OCI-LY7 (cell line): ENCODE measurements at regions of chr6 and their contacts with region 1.

Region 1: DNA sequence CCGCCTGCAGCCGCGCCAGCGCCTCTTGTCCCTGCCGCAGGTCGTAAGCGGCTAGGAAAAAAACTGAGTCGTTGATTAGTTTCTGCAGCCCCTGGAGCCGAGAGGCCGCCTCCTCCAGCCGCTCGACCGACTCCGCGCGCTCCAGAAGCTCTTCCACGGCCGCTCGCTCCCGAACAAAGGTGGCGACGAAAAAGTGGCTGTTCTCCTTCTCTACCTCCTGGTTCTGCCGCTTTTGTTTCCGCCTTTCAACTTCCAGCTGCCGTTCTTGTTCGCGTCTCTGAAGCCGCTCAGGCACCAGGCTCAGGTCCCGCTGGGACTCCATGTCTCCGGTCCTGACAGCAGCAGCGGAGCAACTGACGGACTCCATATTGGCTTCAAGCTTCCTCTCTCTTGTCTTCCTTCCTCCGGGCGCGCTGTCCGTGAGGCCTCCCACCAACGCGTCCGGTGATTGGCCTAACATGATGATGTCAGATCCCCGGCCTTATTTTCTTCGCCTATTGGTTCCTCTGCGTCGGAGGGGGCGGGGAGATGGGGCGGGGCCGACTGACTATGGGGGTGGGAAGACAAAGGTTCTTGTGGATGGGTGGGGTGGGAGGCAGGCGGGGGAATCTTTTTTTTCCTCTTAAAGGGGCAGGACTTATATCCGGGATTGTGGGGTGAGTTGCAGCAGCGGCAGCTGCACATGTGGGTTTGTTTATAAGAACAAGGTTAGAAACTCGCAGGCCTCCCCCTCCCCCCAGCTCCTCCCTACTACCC is at the start of gene TBCC:
- DNase-seq: peak; percentile 99
- H3K4me3 ChIP-seq: peak within 1 kb of the TSS; percentile 82
- H3K27ac ChIP-seq: peak within 1 kb of the TSS; percentile 95
- H3K4me1 ChIP-seq: peaks cover 48% of the 10 kb centered on the region
- CTCF ChIP-seq: no peak
- total RNA-seq, gene TBCC: 118 and 136 TPM in 2 replicates

Region 2: DNA sequence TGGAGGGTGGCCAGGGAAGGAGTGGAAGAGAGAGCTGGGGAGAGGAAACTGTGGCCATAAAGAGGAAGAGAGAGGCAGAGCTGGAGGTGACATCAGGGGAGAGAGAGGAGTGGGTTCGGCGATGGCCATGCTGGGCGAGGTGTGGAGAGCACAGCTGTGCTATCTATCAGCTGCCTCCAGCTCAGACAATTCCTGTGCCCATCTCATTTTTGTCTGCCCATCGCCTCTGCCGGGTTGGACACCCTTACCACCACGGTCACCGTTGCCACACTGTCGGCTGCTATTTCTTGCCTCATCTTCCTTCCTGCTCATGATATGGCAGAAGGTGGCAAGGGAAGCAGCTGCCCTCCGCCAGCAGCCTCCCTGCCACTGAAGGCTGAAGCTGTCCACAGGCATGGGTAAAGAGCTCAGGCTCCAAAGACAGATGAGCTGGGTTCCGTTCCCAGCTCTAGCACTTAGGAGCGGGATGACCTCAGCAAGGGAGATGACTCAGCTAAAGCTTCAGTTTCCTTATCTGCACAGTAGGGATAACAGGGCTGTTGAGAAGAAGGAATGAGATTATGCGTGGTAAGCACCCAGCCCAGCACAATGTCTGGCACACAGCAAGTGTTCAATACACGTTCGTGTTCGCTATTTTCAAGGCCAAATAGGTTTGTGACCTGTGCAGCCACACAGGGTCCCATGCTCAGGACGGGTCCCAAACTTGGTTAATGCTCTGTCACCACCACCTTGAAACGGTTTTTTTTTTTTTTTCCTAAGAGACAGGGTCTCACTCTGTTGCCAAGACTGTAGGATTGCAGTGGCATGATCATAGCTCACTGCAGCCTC is 717.4 kb before region 1 on chr6:
- CTCF ChIA-PET with region 1: no interaction called
- POLR2A ChIA-PET with region 1: interaction called, 5 read pairs
- intact Hi-C with region 1: loop called (anchors 10 kb)
- DNase-seq: no peak
- H3K4me3 ChIP-seq: no peak overlapping the region
- H3K27ac ChIP-seq: peak overlapping the region; percentile 98
- H3K4me1 ChIP-seq: peaks cover 100% of the 10 kb centered on the region
- CTCF ChIP-seq: no peak

Region 3: DNA sequence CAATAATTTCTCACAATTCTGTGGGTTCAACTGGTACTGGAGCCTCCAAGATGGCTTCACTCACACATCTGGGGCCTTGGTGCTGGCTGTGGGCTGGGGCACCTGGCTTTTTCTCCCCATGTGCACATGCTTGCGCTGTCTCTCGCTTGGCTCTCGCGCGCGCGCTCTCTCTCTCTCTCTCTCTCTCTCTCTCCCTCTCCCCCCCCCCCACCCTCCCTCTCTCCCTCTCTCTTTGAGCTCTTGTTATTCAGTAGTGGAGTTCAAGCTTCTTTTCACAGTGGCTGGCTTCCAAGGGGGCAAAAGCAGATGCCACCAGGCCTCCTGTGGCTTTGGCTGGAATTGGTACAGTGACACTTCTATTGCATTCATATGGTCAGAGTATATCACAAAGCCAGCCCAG is 10.8 kb after region 1 on chr6:
- CTCF ChIA-PET with region 1: interaction called, 3 read pairs
- POLR2A ChIA-PET with region 1: interaction called, 26 read pairs
- intact Hi-C with region 1: no loop called
- DNase-seq: no peak
- H3K4me3 ChIP-seq: no peak overlapping the region
- H3K27ac ChIP-seq: no peak overlapping the region
- H3K4me1 ChIP-seq: peaks cover 14% of the 10 kb centered on the region
- CTCF ChIP-seq: no peak

Region 4: DNA sequence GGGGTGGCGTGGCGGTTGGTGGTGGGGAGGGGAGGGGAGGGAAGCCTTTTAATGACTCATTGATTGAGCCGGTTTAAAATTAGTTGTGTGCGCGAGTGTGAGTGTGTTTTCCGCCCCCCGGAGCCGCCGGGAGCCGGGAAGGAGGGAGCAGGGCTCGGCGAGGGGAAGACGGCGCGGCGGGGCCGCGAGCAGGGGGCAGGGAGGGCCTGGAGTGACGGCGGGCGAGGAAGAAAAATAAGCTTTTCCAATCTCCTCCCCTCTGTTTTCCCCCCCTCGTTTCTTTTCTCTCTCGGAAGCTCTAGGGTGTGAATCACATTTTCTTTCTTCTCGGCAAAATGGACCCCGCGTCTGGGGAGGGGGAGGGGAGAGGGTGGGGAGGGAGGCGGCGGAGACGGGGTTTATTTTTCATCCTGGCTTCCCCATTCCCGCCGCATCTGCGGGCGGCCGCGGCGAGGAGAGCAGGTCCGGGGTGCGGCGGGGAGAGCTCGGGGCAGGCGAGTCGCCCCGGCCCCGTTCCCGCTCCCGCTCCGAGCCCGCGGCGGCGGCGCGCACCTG is 36.8 kb after region 1 on chr6:
- CTCF ChIA-PET with region 1: no interaction called
- POLR2A ChIA-PET with region 1: interaction called, 494 read pairs
- intact Hi-C with region 1: loop called (anchors 1 kb)
- DNase-seq: peak; percentile 74
- H3K4me3 ChIP-seq: peak overlapping the region; percentile 75
- H3K27ac ChIP-seq: peak overlapping the region; percentile 92
- H3K4me1 ChIP-seq: peaks cover 69% of the 10 kb centered on the region
- CTCF ChIP-seq: no peak

Region 5: DNA sequence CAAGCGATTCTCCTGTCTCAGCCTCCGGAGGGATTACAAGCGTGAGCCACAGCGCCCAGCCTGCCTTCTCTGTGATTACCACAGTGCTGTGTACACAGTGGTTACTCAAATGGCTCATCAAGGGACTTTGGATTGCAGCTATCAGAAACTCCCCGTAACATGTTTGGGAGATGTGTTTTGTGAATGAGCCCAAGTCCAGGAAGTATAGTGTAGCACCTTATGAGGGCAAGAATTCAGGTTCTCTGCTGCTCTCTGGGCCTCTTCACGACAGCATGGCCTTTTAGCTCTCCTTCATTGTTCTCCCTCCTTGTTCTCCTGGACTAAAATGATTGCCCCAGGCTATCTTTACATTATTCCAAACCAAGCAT is 99.4 kb after region 1 on chr6:
- CTCF ChIA-PET with region 1: no interaction called
- POLR2A ChIA-PET with region 1: no interaction called
- intact Hi-C with region 1: no loop called
- DNase-seq: no peak
- H3K4me3 ChIP-seq: no peak overlapping the region
- H3K27ac ChIP-seq: no peak overlapping the region
- H3K4me1 ChIP-seq: no peaks in the 10 kb centered on the region
- CTCF ChIP-seq: no peak

Region 6: DNA sequence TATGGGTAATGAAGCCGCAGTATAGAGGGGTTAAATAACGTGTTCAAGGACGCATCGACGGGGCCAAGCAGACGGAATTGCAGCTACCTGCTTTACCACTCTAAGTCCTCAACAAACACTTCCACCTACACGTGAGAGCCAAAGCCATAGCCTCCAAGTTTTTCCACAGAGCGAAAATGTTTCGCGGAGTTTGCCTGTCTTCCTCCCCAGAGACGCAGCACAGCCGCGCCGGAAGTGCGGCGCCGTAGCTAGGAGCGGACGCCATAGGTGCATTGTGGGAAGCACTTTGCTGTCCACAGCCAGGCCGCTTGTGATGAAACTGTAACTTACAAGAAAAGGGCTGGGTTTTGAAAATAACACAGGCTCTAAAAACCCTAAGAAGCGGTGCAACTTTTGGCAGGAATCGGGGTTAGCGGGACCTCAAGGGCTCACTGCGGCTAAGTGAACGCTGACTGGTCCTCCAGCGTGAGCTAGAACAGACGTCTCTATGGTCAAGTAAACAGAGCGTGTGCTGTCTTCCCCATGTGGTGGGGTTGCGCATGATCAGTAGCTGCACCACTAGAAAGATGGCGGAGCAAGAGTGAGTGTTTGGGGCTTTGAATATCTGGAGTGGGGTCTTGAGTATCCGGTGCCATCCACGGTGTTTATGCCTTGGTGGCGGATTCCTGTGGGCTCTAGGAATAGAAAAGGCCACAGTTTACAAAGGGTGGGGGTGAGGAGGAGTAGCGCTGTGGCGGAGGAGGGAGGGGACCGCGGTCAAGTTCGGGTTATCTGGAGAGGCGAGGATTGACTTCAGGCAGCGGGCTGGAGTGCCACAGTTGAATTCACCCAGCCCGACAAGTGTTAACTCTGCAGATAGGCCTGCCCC is 133.7 kb after region 1 on chr6 and contains the start of gene RPL7L1:
- CTCF ChIA-PET with region 1: no interaction called
- POLR2A ChIA-PET with region 1: interaction called, 8 read pairs
- intact Hi-C with region 1: loop called (anchors 1 kb)
- DNase-seq: peak; percentile 92
- H3K4me3 ChIP-seq: peak within 1 kb of the TSS; percentile 79
- H3K27ac ChIP-seq: peak within 1 kb of the TSS; percentile 75
- H3K4me1 ChIP-seq: peaks cover 18% of the 10 kb centered on the region
- CTCF ChIP-seq: no peak
- total RNA-seq, gene RPL7L1: 83.2 and 101 TPM in 2 replicates

Region 7: GRCh38 chr6:43174263-43175112 is 428.6 kb after region 1 on chr6:
- CTCF ChIA-PET with region 1: no interaction called
- POLR2A ChIA-PET with region 1: no interaction called
- intact Hi-C with region 1: loop called (anchors 5 kb)
- DNase-seq: peak; percentile 97
- H3K4me3 ChIP-seq: peak overlapping the region; percentile 90
- H3K27ac ChIP-seq: peak overlapping the region; percentile 35
- H3K4me1 ChIP-seq: peaks cover 34% of the 10 kb centered on the region
- CTCF ChIP-seq: no peak